A549 (cell line): ENCODE measurements at regions of chr15 and their contacts with region 1.

Region 1: DNA sequence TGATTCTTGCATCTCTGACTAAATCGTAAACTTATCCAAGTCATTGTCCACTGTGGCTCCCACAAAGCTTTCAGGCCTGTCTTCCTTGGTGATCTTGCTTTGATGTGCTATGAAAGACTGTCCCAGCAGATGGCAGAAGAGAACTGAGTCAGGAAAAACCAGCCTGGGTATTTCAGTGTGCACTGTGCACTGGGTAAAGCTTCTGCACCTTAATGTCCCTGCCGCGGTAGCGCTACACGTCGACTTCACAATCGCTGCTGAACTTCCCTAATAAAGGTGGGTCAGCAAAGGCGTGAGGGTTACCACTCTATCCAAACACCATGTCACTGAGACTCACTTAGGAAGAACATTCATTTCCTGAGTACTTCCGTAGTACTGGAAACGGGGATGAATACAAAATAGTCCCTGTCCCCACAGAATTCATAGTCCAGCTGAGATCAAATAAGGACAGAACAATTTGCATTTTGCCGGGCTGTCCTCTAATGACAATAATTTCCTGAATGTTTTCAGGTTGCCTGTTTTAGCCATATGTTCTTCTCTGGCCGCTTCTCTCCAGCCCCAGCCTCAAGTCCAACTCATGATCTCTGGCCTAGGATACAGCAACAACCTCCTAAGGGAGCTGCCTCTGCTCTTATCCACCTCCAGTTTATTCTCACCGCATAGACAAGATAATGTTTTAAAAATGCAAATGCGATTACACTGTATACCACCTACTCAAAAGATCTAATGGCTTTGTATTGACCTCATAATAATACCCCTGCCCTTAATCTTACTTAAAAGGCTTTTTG is 83.6 kb upstream of the AKAP13 start:
- DNase-seq: peak; percentile 86 to 90
- ATAC-seq: peak; percentile 98
- H3K4me3 ChIP-seq: no peak overlapping the region
- H3K27ac ChIP-seq: peak overlapping the region; percentile 53 to 60; a peak in 5 of 6 replicates
- H3K4me1 ChIP-seq: peaks cover 5% of the 10 kb centered on the region; the same call in 2 of the 3 replicates
- CTCF ChIP-seq: peak; percentile 98
- EP300 ChIP-seq: no peak
- POLR2A ChIP-seq: no peak
- RAD21 ChIP-seq: peak; percentile 97 to 99

Region 2: DNA sequence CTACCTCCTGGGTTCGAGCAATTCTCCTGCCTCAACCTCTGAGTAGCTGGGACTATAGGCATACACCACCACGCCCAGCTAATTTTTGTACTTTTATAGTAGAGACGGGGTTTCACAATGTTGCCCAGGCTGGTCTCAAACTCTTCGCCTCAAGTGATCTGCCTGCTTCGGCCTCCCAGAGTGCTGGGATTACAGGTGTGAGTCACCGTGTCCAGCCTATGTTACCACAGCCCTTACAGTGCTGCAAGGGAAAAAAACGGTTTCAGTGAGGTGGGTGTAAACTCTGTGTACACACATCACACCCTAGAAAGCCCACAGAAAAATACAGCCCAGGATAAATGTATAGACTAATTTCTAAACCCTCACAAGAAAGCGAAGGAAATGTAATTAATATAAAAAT is 19.9 kb before region 1 on chr15:
- CTCF ChIA-PET with region 1: interaction called, 13 read pairs
- POLR2A ChIA-PET with region 1: no interaction called
- DNase-seq: no peak
- ATAC-seq: no peak
- H3K4me3 ChIP-seq: no peak overlapping the region
- H3K27ac ChIP-seq: no peak overlapping the region
- H3K4me1 ChIP-seq: no peaks in the 10 kb centered on the region
- CTCF ChIP-seq: no peak
- EP300 ChIP-seq: no peak
- POLR2A ChIP-seq: no peak
- RAD21 ChIP-seq: no peak

Region 3: DNA sequence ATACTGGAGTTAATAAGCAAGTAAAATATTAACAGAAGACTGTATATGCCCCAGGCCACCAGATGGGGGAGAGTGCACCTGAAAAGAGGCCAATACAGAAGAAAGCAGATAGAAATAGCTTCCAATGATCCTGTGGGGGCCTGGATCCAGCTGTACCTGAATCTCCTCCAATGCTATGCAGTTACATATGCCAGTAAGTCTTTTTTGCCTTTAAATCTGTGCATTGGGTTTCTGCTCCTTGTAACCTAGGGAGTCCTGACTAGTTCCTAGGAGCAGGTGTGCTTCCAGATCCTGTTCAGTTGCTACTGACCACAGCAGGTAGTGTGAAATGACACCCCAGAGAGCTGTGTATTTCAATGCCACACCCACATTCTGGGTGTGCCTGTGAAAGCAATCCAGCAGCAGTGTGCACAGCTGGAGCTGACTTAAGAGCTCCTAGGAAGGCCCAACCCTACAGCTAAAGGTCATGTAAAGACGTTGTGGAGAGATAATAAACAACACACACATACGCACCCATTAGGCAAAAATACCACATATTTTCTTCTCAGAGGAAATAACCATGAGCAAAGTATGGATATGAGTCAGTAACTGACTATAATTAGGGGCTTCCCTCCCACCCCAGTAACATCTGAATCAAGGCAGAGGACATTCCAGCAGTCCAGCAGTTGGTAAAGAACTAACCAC is 21.4 kb after region 1 on chr15:
- CTCF ChIA-PET with region 1: interaction called, 83 read pairs
- POLR2A ChIA-PET with region 1: no interaction called
- DNase-seq: peak; percentile 29 to 75
- ATAC-seq: peak; percentile 70 to 81
- H3K4me3 ChIP-seq: no peak overlapping the region
- H3K27ac ChIP-seq: 0 out of 6 replicates have a peak overlapping the region, but pooled peaks have one; percentile 1 to 6
- H3K4me1 ChIP-seq: peaks cover 23% of the 10 kb centered on the region
- CTCF ChIP-seq: no peak; the same call in 2 of the 3 replicates
- EP300 ChIP-seq: no peak
- POLR2A ChIP-seq: no peak
- RAD21 ChIP-seq: no peak; a peak in 2 of 5 replicates

Region 4: DNA sequence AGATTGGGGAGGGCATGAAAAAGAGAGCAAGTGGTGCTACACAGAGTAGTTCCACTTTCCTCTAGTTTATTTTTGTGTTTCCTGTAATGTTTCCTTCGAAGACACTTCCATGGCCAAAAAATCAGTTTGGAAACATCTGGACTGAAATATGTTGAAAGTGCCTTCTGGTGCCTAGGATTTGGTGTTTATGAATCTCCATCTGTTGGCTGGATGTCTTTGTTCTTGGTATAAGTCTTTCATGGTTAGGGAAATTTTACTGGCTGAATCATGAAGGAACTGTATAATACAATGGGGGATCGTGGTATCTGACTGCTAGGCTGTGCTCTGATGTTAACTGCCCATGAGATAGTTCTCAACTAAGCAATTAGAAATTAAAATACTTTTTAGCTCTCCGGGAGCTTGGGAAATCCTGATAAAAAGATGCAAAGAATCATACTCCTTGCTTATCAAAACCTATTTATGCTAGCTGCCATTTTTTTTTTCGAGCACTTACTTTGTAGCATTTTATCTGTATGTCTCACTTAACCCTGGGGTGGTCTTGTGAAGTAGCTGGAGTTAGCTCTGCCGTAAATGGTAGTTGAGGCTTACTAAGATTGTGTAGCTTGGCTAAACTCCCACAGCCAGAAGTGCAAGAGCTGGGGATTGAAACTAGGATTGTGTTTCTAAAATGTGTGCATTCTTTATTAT is 105.5 kb after region 1 on chr15:
- CTCF ChIA-PET with region 1: interaction called, 14 read pairs
- POLR2A ChIA-PET with region 1: no interaction called
- DNase-seq: no peak
- ATAC-seq: no peak
- H3K4me3 ChIP-seq: no peak overlapping the region
- H3K27ac ChIP-seq: 0 out of 6 replicates have a peak overlapping the region, but pooled peaks of 1 of the 2 experiments have one; percentile 1
- H3K4me1 ChIP-seq: peaks cover 59% of the 10 kb centered on the region
- CTCF ChIP-seq: no peak
- EP300 ChIP-seq: no peak
- POLR2A ChIP-seq: no peak
- RAD21 ChIP-seq: no peak

Region 5: DNA sequence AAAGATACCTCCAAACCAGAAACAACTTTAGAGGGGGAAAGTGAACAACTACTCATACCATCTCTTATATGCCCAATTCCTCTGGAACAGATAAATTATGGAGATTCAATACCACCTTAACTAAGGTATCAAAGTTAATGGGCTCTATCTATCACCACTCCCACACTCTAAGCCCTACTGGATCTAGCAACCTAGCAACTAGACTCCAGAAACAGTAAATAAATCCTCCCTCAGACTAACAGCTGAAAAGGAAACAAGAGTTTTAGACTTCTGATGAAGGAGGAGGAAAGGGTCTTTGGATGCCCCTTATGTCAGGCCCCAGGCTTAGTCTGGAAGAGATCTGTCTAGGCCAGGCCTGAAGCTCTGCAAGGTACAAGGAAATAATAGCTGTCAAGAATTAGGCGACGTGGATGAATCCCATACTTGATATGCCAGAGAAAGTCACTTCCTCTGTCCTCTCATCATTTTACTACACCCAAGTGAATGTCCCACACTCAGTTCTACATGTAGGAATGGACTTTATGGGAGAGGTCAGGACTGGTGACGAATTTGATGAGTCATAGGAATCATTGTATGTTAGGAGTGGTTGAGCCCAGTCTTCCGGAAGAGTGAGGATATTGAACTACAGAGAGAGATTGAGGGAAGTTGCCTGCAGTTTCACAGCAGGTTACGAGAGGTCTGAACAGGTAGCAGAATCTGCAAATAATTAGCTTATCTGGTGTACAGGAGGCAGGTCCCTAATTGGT is 197.4 kb after region 1 on chr15:
- CTCF ChIA-PET with region 1: interaction called, 42 read pairs
- POLR2A ChIA-PET with region 1: no interaction called
- DNase-seq: peak; percentile 91 to 92
- ATAC-seq: peak; percentile 96 to 97
- H3K4me3 ChIP-seq: no peak overlapping the region
- H3K27ac ChIP-seq: peak overlapping the region; percentile 47 to 81
- H3K4me1 ChIP-seq: peaks cover 57% of the 10 kb centered on the region
- CTCF ChIP-seq: no peak
- EP300 ChIP-seq: no peak
- POLR2A ChIP-seq: no peak
- RAD21 ChIP-seq: no peak

Region 6: DNA sequence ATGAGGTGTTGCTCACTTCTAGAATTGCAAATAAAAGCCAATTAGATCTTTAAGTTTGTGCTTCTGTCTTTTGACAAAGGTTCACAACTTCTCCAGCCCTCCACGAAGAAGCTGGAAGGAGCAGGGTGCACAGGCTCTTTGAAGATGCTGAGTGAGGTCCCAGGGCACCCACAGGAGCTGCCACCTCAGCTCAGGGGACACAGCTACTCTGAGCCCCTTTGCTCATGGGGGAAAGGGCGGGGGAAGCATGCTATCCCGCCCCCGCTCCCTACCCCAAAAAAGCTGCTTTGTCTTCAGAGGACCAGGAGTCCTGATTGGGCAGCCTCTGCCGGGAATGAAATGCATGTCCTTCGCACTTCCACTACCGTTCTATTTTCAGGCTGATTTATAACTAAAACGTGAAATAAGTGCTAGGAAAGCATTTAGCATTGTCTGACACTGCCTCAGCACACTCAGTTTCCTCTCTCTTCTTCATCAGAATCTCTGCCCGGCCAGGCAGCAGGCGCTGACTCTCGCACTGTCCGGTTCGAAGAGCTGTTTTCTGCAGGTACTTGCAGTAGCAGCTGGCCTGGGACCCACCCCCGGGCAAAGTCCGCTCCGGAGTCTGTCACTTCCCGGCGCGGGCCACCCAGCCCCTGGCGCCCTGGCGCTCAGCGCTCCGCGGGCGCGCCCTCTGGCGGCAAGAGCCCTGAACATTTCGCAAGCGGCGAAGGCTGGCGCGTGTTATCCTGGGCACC is 543.4 kb after region 1 on chr15:
- CTCF ChIA-PET with region 1: interaction called, 22 read pairs
- POLR2A ChIA-PET with region 1: no interaction called
- DNase-seq: peak; percentile 90 to 91
- ATAC-seq: peak; percentile 90 to 94
- H3K4me3 ChIP-seq: peak overlapping the region; percentile 33
- H3K27ac ChIP-seq: peak overlapping the region; percentile 51 to 59; a peak in 5 of 6 replicates
- H3K4me1 ChIP-seq: peaks cover 26% of the 10 kb centered on the region
- CTCF ChIP-seq: peak; percentile 99
- EP300 ChIP-seq: no peak
- POLR2A ChIP-seq: no peak
- RAD21 ChIP-seq: peak; percentile 78 to 96

Region 7: GRCh38 chr15:85852969-85853368 is 556.2 kb after region 1 on chr15:
- CTCF ChIA-PET with region 1: no interaction called
- POLR2A ChIA-PET with region 1: no interaction called
- DNase-seq: no peak
- ATAC-seq: no peak
- H3K4me3 ChIP-seq: no peak overlapping the region
- H3K27ac ChIP-seq: no peak overlapping the region
- H3K4me1 ChIP-seq: no peaks in the 10 kb centered on the region
- CTCF ChIP-seq: no peak
- EP300 ChIP-seq: no peak
- POLR2A ChIP-seq: no peak
- RAD21 ChIP-seq: no peak